B cell (primary cell): ENCODE measurements at regions of chr1 and their contacts with region 1.

Region 1: GRCh38 chr1:66725885-66726665 is 26.2 kb upstream of the DYNLT5 start:
- DNase-seq: peak; percentile 69
- ATAC-seq: no peak
- H3K4me3 ChIP-seq: no peak overlapping the region
- H3K4me3 Mint-ChIP-seq: no peak overlapping the region
- H3K27ac ChIP-seq: no peak overlapping the region
- H3K27ac Mint-ChIP-seq: no peak overlapping the region
- H3K4me1 ChIP-seq: no peaks in the 10 kb centered on the region
- H3K4me1 Mint-ChIP-seq: peaks cover 8% of the 10 kb centered on the region
- H3K27me3 ChIP-seq: no peaks in the 10 kb centered on the region
- H3K27me3 Mint-ChIP-seq: peaks cover 53% of the 10 kb centered on the region
- CTCF ChIP-seq: peak; percentile 93

Region 2: DNA sequence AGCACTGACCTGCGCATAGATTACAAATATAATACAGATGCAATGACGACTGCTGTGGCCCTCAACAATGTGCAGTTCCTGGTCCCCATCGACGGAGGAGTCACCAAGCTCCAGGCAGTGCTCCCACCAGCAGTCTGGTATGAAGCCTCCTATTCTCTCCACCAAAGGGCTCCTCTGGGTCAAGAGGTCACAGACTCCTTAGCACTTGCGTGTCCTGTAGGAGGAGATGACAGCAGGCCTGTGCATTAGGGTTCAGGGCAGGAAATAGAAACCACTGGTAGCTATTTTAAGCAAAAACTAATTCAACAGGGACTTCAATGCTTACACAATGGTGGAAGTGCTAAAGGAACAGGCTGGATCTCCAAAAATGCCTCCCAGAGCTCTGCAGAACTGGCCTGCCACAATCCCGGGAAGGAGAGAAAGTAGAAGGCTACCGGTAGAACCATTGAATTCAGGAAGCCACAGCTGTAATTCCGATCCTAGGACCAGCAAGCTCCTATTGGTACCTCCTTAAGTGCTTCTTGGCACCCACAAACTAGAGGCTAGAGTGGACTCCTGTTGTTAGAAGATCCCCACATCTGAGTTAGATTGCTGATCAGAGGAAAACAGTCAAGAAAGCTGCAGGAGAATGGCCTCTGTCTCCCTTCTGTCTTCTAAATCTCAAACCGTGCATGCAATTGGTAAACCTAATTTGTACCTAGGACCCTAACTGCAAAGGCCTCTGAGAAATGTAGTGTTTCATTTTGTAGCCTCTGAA is 13.5 kb after region 1 on chr1:
- CTCF ChIA-PET with region 1: interaction called, 11 read pairs
- POLR2A ChIA-PET with region 1: no interaction called
- intact Hi-C with region 1: no loop called
- DNase-seq: no peak
- ATAC-seq: no peak
- H3K4me3 ChIP-seq: no peak overlapping the region
- H3K4me3 Mint-ChIP-seq: no peak overlapping the region
- H3K27ac ChIP-seq: no peak overlapping the region
- H3K27ac Mint-ChIP-seq: no peak overlapping the region
- H3K4me1 ChIP-seq: peaks cover 4 to 6% of the 10 kb centered on the region in 2 donors
- H3K4me1 Mint-ChIP-seq: peaks cover 7% of the 10 kb centered on the region
- H3K27me3 ChIP-seq: peaks cover 0 to 2% (median 0%) of the 10 kb centered on the region in 4 experiments
- H3K27me3 Mint-ChIP-seq: peaks cover 5% of the 10 kb centered on the region
- CTCF ChIP-seq: no peak

Region 3: GRCh38 chr1:66745451-66745850 is 19.4 kb after region 1 on chr1:
- CTCF ChIA-PET with region 1: interaction called, 11 read pairs
- POLR2A ChIA-PET with region 1: no interaction called
- intact Hi-C with region 1: no loop called
- DNase-seq: no peak
- ATAC-seq: no peak
- H3K4me3 ChIP-seq: no peak overlapping the region
- H3K4me3 Mint-ChIP-seq: no peak overlapping the region
- H3K27ac ChIP-seq: no peak overlapping the region
- H3K27ac Mint-ChIP-seq: no peak overlapping the region
- H3K4me1 ChIP-seq: no peaks in the 10 kb centered on the region
- H3K4me1 Mint-ChIP-seq: no peaks in the 10 kb centered on the region
- H3K27me3 ChIP-seq: peaks cover 0 to 4% (median 0%) of the 10 kb centered on the region in 4 experiments
- H3K27me3 Mint-ChIP-seq: peaks cover 26% of the 10 kb centered on the region
- CTCF ChIP-seq: no peak